ENCODE measurements at regions of chr4 and their contacts with region 1.

Region 1: DNA sequence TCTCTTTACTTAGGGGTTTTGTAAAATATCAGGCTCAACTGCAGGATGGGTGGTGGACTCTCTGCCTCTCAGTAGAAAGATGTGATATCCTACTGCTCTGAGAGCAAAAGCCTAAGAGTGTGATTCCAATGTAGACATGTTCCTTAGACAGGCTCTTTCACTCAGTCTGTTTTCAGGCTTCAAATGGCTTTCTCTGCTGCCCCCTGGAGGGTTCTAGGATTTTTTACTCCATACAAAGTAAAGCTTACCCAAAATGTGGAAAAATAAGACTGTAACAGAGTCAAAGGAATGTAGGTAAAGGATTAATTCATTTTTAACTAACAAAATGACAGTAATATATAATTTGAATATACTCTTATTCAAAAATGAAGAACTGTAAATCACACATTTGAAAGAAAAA is 32.1 kb downstream of the ZGRF1 start:
- DNase-seq: peak; percentile 66
- H3K4me3 Mint-ChIP-seq: no peak overlapping the region
- H3K27ac Mint-ChIP-seq: no peak overlapping the region
- H3K4me1 Mint-ChIP-seq: no peaks in the 10 kb centered on the region
- H3K27me3 Mint-ChIP-seq: no peaks in the 10 kb centered on the region
- CTCF ChIP-seq: peak; percentile 47

Region 2: GRCh38 chr4:112075129-112075753 is 529.3 kb before region 1 on chr4:
- CTCF ChIA-PET with region 1: interaction called, 3 read pairs
- POLR2A ChIA-PET with region 1: no interaction called
- intact Hi-C with region 1: loop called (anchors 1 kb)
- DNase-seq: peak; percentile 73
- H3K4me3 Mint-ChIP-seq: no peak overlapping the region
- H3K27ac Mint-ChIP-seq: no peak overlapping the region
- H3K4me1 Mint-ChIP-seq: no peaks in the 10 kb centered on the region
- H3K27me3 Mint-ChIP-seq: no peaks in the 10 kb centered on the region
- CTCF ChIP-seq: peak; percentile 76

Region 3: GRCh38 chr4:112214390-112215264 is 390.0 kb before region 1 on chr4:
- CTCF ChIA-PET with region 1: no interaction called
- POLR2A ChIA-PET with region 1: no interaction called
- intact Hi-C with region 1: loop called (anchors 1 kb)
- DNase-seq: peak; percentile 61
- H3K4me3 Mint-ChIP-seq: no peak overlapping the region
- H3K27ac Mint-ChIP-seq: peak overlapping the region; percentile 90
- H3K4me1 Mint-ChIP-seq: peaks cover 12% of the 10 kb centered on the region
- H3K27me3 Mint-ChIP-seq: no peaks in the 10 kb centered on the region
- CTCF ChIP-seq: peak; percentile 48

Region 4: GRCh38 chr4:112327965-112328733 is 276.4 kb before region 1 on chr4:
- CTCF ChIA-PET with region 1: interaction called, 167 read pairs
- POLR2A ChIA-PET with region 1: no interaction called
- intact Hi-C with region 1: loop called (anchors 1 kb)
- DNase-seq: peak; percentile 60
- H3K4me3 Mint-ChIP-seq: no peak overlapping the region
- H3K27ac Mint-ChIP-seq: no peak overlapping the region
- H3K4me1 Mint-ChIP-seq: no peaks in the 10 kb centered on the region
- H3K27me3 Mint-ChIP-seq: no peaks in the 10 kb centered on the region
- CTCF ChIP-seq: peak; percentile 42

Region 5: DNA sequence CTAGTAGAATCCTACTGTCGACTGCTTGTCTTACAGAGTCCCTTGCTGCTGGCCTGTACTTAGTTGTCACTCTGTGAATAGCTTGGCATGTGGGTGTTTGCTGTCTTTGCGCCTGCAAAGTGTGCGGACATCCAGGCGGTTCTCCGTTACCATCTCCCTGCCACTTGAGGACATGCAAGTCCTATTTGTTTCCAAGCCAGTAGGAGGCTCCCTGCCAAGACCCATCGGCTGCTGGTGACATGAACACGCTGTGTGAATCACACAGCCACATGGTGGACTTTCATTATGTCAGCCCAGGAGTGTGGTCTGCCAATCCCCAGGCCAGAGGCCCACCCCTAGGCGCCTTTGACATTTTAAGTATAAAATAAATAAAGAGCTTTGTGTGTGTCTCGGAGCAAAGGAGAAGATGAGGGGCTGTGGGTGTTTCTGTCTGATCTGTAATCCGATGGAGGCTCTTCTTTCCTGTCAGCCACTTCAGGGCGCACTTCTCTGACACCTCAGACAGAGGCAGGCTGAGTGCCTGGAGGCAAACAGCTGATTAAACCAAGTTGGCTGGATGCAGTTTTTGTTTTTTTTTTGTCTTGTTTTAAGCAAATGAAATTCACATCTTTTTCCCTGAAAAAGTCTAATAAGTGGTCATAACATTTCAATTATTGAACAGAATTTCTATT is 256.0 kb before region 1 on chr4:
- CTCF ChIA-PET with region 1: interaction called, 5 read pairs
- POLR2A ChIA-PET with region 1: no interaction called
- intact Hi-C with region 1: loop called (anchors 1 kb)
- DNase-seq: peak; percentile 57
- H3K4me3 Mint-ChIP-seq: peak overlapping the region; percentile 53
- H3K27ac Mint-ChIP-seq: peak overlapping the region; percentile 29
- H3K4me1 Mint-ChIP-seq: peaks cover 8% of the 10 kb centered on the region
- H3K27me3 Mint-ChIP-seq: no peaks in the 10 kb centered on the region
- CTCF ChIP-seq: no peak

Region 6: GRCh38 chr4:112523764-112524505 is 80.7 kb before region 1 on chr4:
- CTCF ChIA-PET with region 1: interaction called, 14 read pairs
- POLR2A ChIA-PET with region 1: no interaction called
- intact Hi-C with region 1: loop called (anchors 2 kb)
- DNase-seq: peak; percentile 62
- H3K4me3 Mint-ChIP-seq: peak overlapping the region; percentile 69
- H3K27ac Mint-ChIP-seq: no peak overlapping the region
- H3K4me1 Mint-ChIP-seq: no peaks in the 10 kb centered on the region
- H3K27me3 Mint-ChIP-seq: peaks cover 20% of the 10 kb centered on the region
- CTCF ChIP-seq: peak; percentile 87

Measured in MCF 10A (cell line).